AG04450 (cell line): ENCODE measurements at regions of chr17 and their contacts with region 1.

Region 1: GRCh38 chr17:17994271-17995069 is 21.8 kb downstream of the DRC3 start:
- DNase-seq: no peak
- H3K4me3 ChIP-seq: no peak overlapping the region
- H3K27ac ChIP-seq: no peak overlapping the region
- H3K27me3 ChIP-seq: no peaks in the 10 kb centered on the region
- CTCF ChIP-seq: peak; percentile 47

Region 2: GRCh38 chr17:18006495-18007239 is 12.2 kb after region 1 on chr17:
- CTCF ChIA-PET with region 1: no interaction called
- POLR2A ChIA-PET with region 1: interaction called, 12 read pairs
- DNase-seq: no peak
- H3K4me3 ChIP-seq: no peak overlapping the region
- H3K27ac ChIP-seq: no peak overlapping the region
- H3K27me3 ChIP-seq: no peaks in the 10 kb centered on the region
- CTCF ChIP-seq: no peak